ENCODE measurements at regions of chr11 and their contacts with region 1.

Region 1: DNA sequence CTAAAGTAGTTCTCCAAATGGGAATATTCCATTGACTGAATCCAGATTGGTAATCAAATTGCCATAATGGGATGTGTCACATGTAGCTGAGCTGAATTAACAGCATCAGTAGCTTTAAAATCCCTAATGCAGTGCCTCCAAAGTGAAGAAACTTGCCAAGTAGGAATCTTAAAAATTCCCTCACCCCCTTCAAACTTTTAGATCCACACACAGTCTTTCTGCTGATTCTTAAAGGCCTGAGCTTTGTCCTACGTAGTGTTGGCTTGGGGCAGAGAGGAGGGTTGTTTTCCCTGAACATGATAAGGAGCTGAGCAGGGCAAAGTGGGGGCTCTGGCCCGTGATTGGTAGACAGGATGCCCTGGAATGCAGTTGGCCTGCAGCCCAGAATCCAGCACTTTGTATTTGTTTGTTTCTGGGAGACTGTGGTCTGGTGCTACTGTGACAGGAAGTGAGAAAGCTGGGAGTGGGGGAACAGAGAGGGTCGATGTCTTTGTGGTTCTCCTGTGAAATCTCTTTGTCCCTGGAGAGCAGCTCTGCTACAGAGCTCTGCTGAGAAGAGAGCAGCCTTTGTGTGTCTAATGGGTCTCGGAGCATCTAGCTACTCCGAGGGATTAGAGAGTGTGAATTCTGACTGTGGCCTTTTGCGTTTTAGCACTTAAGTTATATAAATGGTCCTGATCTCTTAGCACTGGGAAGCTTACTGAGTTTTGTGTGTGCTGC is 16.9 kb downstream of the CTNND1 start:
- DNase-seq: peak; percentile 78
- ATAC-seq: peak; percentile 94
- H3K4me3 ChIP-seq: peak overlapping the region; percentile 30 to 43
- H3K27ac ChIP-seq: peak overlapping the region; percentile 99
- H3K4me1 ChIP-seq: peaks cover 86% of the 10 kb centered on the region
- H3K27me3 ChIP-seq: no peaks in the 10 kb centered on the region
- CTCF ChIP-seq: no peak

Region 2: DNA sequence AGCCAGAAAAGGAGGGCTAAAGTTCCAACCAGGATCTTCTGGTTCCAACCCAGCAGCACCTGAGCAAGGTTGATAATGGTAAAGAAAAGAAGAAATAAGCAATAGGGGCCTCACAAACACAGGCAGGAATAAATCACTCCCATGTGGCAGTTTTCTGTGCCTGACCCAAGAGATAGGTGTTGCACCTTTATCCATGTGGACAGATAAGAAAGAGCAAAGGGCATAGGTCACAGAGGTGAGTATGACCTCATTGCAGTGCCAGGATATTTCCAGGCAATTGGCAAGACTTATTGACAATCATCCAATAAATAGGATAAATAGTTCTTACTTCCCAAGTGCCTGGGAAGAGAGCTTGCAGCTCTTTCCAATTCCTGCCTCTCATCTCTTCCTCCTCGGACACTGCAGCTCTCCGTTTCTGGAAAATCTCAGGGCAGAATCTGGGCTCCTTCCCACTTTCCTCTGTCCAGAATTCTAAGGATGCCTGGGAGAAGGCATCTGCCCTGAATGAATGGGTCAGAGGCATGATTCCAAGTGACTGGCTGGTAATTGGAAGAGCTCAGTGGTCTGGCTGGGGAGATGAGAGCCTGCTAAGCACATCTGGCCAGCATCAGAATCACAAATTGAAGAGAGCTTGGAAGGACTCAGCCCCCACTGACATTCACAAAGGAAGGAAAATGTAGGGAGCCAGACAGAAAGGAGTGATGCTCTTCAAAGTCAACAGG is 611.2 kb before region 1 on chr11:
- CTCF ChIA-PET with region 1: no interaction called
- POLR2A ChIA-PET with region 1: no interaction called
- in situ Hi-C with region 1: no loop called
- intact Hi-C with region 1: no loop called
- DNase-seq: no peak
- ATAC-seq: no peak
- H3K4me3 ChIP-seq: no peak overlapping the region
- H3K27ac ChIP-seq: no peak overlapping the region
- H3K4me1 ChIP-seq: no peaks in the 10 kb centered on the region
- H3K27me3 ChIP-seq: peaks cover 2% of the 10 kb centered on the region; the same call in 1 of the 2 replicates
- CTCF ChIP-seq: no peak

Region 3: DNA sequence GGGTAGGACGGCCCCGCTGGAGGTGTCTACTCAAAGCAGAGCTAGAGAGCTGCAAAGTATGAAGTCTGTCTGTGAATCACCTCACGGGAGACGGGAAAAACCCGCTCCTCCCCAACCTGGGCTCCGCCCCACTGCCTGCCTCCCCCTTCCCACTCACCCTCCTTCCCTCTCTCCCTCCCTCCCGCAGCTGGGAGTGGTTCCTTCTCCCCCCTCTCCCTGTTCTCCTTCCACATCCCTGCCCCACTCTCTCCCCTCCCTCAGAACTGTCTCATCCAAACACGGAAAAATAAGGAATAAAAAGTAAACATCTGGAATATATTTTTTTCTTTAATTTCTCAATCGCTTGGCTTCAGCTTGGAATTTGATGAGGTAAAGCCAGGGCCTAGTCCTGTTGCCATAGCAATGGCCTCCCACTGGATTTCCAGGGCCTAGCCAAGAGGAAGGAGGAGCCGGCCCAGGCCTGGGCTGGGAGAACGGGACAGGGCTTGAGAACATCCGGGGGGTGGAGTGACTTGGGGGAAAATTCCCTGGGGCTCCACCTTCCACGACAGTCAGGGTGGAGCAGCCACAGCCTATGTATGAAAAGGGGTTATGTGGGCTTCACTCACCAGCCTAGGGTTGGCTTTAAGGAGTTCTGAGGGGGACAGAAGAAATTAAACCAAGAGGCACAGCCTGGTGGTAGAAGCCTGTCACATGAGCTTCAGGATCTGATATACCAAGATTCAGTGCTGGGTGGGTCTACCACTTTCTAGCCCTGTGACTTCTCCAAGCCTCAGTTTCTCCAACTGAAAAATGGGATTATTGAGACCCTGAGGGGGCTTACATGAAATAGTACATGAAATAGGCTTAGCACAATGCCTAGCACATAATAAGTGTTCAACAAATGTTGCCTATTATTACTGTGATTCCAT is 456.0 kb before region 1 on chr11:
- CTCF ChIA-PET with region 1: no interaction called
- POLR2A ChIA-PET with region 1: interaction called, 17 read pairs
- in situ Hi-C with region 1: no loop called
- intact Hi-C with region 1: no loop called
- DNase-seq: no peak
- ATAC-seq: peak; percentile 63
- H3K4me3 ChIP-seq: peak overlapping the region; percentile 71 to 77
- H3K27ac ChIP-seq: peak overlapping the region; percentile 86
- H3K4me1 ChIP-seq: peaks cover 39% of the 10 kb centered on the region
- H3K27me3 ChIP-seq: no peaks in the 10 kb centered on the region
- CTCF ChIP-seq: no peak

Measured in Panc1 (cell line).